ENCODE measurements at regions of chr7 and their contacts with region 1.

Region 1: DNA sequence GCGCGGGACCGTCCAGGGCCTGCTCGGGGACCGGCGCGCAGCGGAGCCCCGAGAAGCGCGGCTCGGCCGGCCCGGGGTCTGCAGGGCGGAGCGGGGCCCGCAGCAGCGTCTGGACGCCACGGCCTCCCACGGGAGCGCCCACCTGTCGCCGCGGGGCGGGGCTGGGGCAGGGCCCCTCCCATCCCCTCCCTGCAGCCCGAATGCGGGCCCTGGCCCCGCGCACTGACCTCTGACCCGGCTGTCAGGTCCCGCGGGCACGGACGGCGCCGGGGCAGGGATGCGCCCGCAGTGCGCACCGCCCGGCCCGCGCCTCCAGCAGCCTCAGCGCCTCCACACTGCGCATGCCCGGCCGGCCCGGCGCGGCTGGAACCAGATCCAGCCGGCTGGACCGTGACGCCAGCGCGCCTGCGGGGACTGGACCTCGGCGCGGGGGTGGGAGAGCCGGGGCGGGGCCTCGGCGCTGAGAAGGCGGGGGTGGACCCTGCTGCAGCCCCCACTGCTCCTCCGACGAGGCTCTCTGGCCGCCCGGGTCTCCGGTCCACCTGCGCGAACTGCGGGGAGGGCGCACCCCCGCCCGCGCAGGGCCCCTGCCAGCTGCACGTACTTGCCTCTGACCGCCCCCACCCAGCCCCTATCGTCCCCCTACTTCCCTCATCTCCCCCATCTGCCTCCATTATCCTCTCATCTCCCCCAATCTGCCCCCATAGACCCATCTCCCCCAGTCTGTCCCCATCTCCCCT is 16.1 kb upstream of the GPR146 start:
- DNase-seq: peak; percentile 75
- ATAC-seq: peak; percentile 83
- H3K4me3 ChIP-seq: peak overlapping the region; percentile 59 to 73 (median 71)
- H3K27ac ChIP-seq: peak overlapping the region; percentile 68
- H3K4me1 ChIP-seq: peaks cover 29% of the 10 kb centered on the region
- H3K27me3 ChIP-seq: no peaks in the 10 kb centered on the region
- CTCF ChIP-seq: no peak; the same call in 1 of the 2 replicates
- EP300 ChIP-seq: no peak
- POLR2A ChIP-seq: no peak
- RAD21 ChIP-seq: peak; percentile 35; the same call in 1 of the 2 replicates

Region 2: GRCh38 chr7:909358-910329 is 118.6 kb before region 1 on chr7:
- CTCF ChIA-PET with region 1: no interaction called
- POLR2A ChIA-PET with region 1: no interaction called
- in situ Hi-C with region 1: no loop called
- intact Hi-C with region 1: no loop called
- DNase-seq: no peak
- ATAC-seq: no peak
- H3K4me3 ChIP-seq: no peak overlapping the region
- H3K27ac ChIP-seq: no peak overlapping the region
- H3K4me1 ChIP-seq: peaks cover 8% of the 10 kb centered on the region; the same call in 1 of the 2 replicates
- H3K27me3 ChIP-seq: no peaks in the 10 kb centered on the region; a peak in 1 of 5 replicates
- CTCF ChIP-seq: no peak
- EP300 ChIP-seq: no peak
- POLR2A ChIP-seq: no peak
- RAD21 ChIP-seq: no peak

Region 3: GRCh38 chr7:1044191-1045068 is 16.2 kb after region 1 on chr7 and contains the start of gene GPR146:
- CTCF ChIA-PET with region 1: no interaction called
- POLR2A ChIA-PET with region 1: interaction called, 12 read pairs
- in situ Hi-C with region 1: no loop called
- intact Hi-C with region 1: no loop called
- DNase-seq: peak; percentile 94
- ATAC-seq: peak; percentile 86
- H3K4me3 ChIP-seq: peak within 1 kb of the TSS; percentile 72 to 85 (median 73)
- H3K27ac ChIP-seq: peak within 1 kb of the TSS; percentile 94
- H3K4me1 ChIP-seq: peaks cover 81% of the 10 kb centered on the region
- H3K27me3 ChIP-seq: no peaks in the 10 kb centered on the region; a peak in 2 of 5 replicates
- CTCF ChIP-seq: peak; percentile 69
- EP300 ChIP-seq: peak in 1 of 2 experiments; percentile 25; a peak in 1 of 4 replicates
- POLR2A ChIP-seq: peak; percentile 35 to 63; a peak in 2 of 4 replicates
- RAD21 ChIP-seq: peak; percentile 67
- total RNA-seq, gene GPR146: 0.84 and 2.0 TPM in 2 replicates

Measured in HepG2 (cell line).